Activated B cell treated with CpG ODN at 0.5 μM for 24 hours (primary cell): ENCODE measurements at regions of chr9 and their contacts with region 1.

Region 1: GRCh38 chr9:16396389-16396788 is 474.1 kb downstream of the BNC2 start:
- DNase-seq: no peak
- ATAC-seq: no peak
- H3K4me3 Mint-ChIP-seq: no peak overlapping the region
- H3K27ac Mint-ChIP-seq: no peak overlapping the region
- H3K4me1 Mint-ChIP-seq: no peaks in the 10 kb centered on the region
- H3K27me3 Mint-ChIP-seq: no peaks in the 10 kb centered on the region
- CTCF ChIP-seq: no peak

Region 2: GRCh38 chr9:16335788-16336580 is 60.4 kb before region 1 on chr9:
- CTCF ChIA-PET with region 1: no interaction called
- POLR2A ChIA-PET with region 1: no interaction called
- intact Hi-C with region 1: loop called (anchors 10 kb)
- DNase-seq: no peak
- ATAC-seq: no peak
- H3K4me3 Mint-ChIP-seq: no peak overlapping the region
- H3K27ac Mint-ChIP-seq: no peak overlapping the region
- H3K4me1 Mint-ChIP-seq: no peaks in the 10 kb centered on the region
- H3K27me3 Mint-ChIP-seq: no peaks in the 10 kb centered on the region
- CTCF ChIP-seq: no peak